Caco-2 (cell line): ENCODE measurements at regions of chr1 and their contacts with region 1.

Region 1: DNA sequence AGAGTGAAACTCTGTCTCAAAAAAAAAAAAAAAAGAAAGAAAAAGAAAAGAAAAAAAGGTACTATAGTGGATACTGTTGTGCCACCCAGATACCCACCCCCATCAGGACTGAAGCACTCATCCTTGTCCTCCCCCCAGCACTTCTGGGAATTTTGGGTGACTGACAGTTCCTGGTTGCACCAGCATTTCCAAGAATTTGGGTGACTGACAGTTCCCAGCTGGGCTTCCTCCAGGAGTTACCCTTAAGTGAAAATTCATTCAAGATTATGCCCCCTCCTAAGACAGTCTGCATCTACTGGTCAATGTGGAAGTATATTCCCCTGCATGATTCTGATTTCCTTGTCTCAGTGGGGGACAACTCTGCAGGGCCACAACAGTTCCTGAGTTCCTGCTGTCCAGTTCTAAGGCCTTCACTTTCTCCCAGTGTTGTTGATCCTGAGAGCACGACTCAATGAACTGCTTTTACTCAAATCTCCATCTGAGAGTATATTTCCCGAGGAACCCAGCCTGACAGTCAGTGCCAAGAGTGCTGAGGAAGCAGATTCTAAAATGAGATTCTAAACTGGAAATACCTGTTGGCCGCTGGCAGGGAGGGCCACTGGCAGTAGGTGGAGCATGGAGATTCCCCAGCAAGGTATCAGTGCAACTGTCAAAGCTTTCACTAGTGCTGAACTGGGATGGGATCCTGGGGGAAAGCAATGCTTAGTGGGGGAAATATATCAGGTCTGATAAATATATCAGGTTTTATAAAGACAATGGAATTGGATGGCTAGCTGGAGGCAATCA is 18.5 kb downstream of the RIIAD1 start:
- DNase-seq: peak in 1 of 2 experiments; percentile 63
- H3K4me3 ChIP-seq: no peak overlapping the region
- H3K4me3 Mint-ChIP-seq: no peak overlapping the region
- H3K27ac Mint-ChIP-seq: no peak overlapping the region
- H3K4me1 ChIP-seq: 0 out of 2 replicates have a peak, but pooled peaks cover 7% of the 10 kb centered on the region
- H3K4me1 Mint-ChIP-seq: peaks cover 12% of the 10 kb centered on the region
- H3K27me3 ChIP-seq: no peaks in the 10 kb centered on the region
- H3K27me3 Mint-ChIP-seq: peaks cover 3% of the 10 kb centered on the region
- CTCF ChIP-seq: peak in 1 of 2 experiments; percentile 5

Region 2: GRCh38 chr1:151399890-151400495 is 339.8 kb before region 1 on chr1:
- CTCF ChIA-PET with region 1: no interaction called
- POLR2A ChIA-PET with region 1: no interaction called
- intact Hi-C with region 1: no loop called
- DNase-seq: no peak
- H3K4me3 ChIP-seq: peak overlapping the region; percentile 80
- H3K4me3 Mint-ChIP-seq: peak overlapping the region; percentile 99
- H3K27ac Mint-ChIP-seq: peak overlapping the region; percentile 99
- H3K4me1 ChIP-seq: peaks cover 7% of the 10 kb centered on the region
- H3K4me1 Mint-ChIP-seq: peaks cover 13% of the 10 kb centered on the region
- H3K27me3 ChIP-seq: no peaks in the 10 kb centered on the region
- H3K27me3 Mint-ChIP-seq: no peaks in the 10 kb centered on the region
- CTCF ChIP-seq: no peak

Region 3: GRCh38 chr1:151443846-151444782 is 295.7 kb before region 1 on chr1:
- CTCF ChIA-PET with region 1: no interaction called
- POLR2A ChIA-PET with region 1: no interaction called
- intact Hi-C with region 1: loop called (anchors 5 kb)
- DNase-seq: peak; percentile 74 to 80
- H3K4me3 ChIP-seq: no peak overlapping the region
- H3K4me3 Mint-ChIP-seq: no peak overlapping the region
- H3K27ac Mint-ChIP-seq: peak overlapping the region; percentile 70
- H3K4me1 ChIP-seq: peaks cover 5% of the 10 kb centered on the region; the same call in 1 of the 2 replicates
- H3K4me1 Mint-ChIP-seq: peaks cover 6% of the 10 kb centered on the region
- H3K27me3 ChIP-seq: no peaks in the 10 kb centered on the region
- H3K27me3 Mint-ChIP-seq: no peaks in the 10 kb centered on the region
- CTCF ChIP-seq: peak; percentile 75 to 82

Region 4: GRCh38 chr1:151539990-151540981 is 199.5 kb before region 1 on chr1 and contains the start of gene TUFT1:
- CTCF ChIA-PET with region 1: interaction called, 3 read pairs
- POLR2A ChIA-PET with region 1: no interaction called
- intact Hi-C with region 1: loop called (anchors 5 kb)
- DNase-seq: peak; percentile 97
- H3K4me3 ChIP-seq: peak within 1 kb of the TSS; percentile 51
- H3K4me3 Mint-ChIP-seq: peak within 1 kb of the TSS; percentile 96
- H3K27ac Mint-ChIP-seq: peak within 1 kb of the TSS; percentile 91
- H3K4me1 ChIP-seq: peaks cover 22% of the 10 kb centered on the region
- H3K4me1 Mint-ChIP-seq: peaks cover 61% of the 10 kb centered on the region
- H3K27me3 ChIP-seq: no peaks in the 10 kb centered on the region
- H3K27me3 Mint-ChIP-seq: no peaks in the 10 kb centered on the region
- CTCF ChIP-seq: no peak
- total RNA-seq, gene TUFT1: 34.9 and 36.6 TPM in 2 replicates

Region 5: DNA sequence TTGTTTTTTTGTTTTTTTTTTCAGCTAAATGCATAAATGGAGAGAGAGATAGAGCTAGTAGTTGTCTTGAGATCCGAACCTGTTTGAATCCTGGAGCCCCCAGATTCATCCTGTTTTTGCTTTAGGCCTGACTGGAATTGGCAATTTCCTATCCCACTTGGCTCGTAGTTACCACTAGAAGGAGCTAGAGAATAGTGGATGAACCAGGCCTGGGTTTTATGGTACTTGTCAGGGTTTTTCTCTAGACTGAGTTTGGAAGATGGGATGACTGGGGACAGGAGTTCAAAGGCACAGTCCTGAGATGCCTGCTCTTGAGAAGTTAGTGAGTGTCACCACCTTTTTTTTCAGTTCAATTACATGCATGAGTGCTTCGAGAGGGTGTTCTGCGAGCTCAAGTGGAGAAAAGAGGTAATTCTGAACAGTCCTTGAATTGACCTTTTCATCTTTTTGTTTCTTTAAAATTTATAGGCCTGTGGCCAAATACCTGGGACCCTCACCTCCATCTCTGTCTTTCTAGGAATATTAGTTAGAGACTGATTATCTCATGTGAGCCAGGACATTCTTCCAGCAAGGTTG is 46.6 kb before region 1 on chr1:
- CTCF ChIA-PET with region 1: interaction called, 14 read pairs
- POLR2A ChIA-PET with region 1: no interaction called
- intact Hi-C with region 1: loop called (anchors 1 kb)
- DNase-seq: peak in 1 of 2 experiments; percentile 54
- H3K4me3 ChIP-seq: no peak overlapping the region
- H3K4me3 Mint-ChIP-seq: no peak overlapping the region
- H3K27ac Mint-ChIP-seq: no peak overlapping the region
- H3K4me1 ChIP-seq: no peaks in the 10 kb centered on the region
- H3K4me1 Mint-ChIP-seq: no peaks in the 10 kb centered on the region
- H3K27me3 ChIP-seq: no peaks in the 10 kb centered on the region
- H3K27me3 Mint-ChIP-seq: no peaks in the 10 kb centered on the region
- CTCF ChIP-seq: peak; percentile 60 to 90

Region 6: GRCh38 chr1:151820940-151821339 is 81.2 kb after region 1 on chr1:
- CTCF ChIA-PET with region 1: no interaction called
- POLR2A ChIA-PET with region 1: no interaction called
- intact Hi-C with region 1: no loop called
- DNase-seq: no peak
- H3K4me3 ChIP-seq: no peak overlapping the region
- H3K4me3 Mint-ChIP-seq: no peak overlapping the region
- H3K27ac Mint-ChIP-seq: no peak overlapping the region
- H3K4me1 ChIP-seq: no peaks in the 10 kb centered on the region
- H3K4me1 Mint-ChIP-seq: no peaks in the 10 kb centered on the region
- H3K27me3 ChIP-seq: no peaks in the 10 kb centered on the region; the same call in none of the 2 replicates
- H3K27me3 Mint-ChIP-seq: no peaks in the 10 kb centered on the region
- CTCF ChIP-seq: no peak